ENCODE measurements at regions of chr7 and their contacts with region 1.

Region 1: GRCh38 chr7:38369816-38370493 is 96.5 kb upstream of the TARP start:
- DNase-seq: peak; percentile 93 to 97 (median 97)
- H3K4me3 ChIP-seq: peak overlapping the region in 2 of 7 experiments; percentile 1 to 39
- H3K27ac ChIP-seq: peak overlapping the region in 1 of 2 experiments; percentile 4
- H3K4me1 ChIP-seq: peaks cover 11 to 41% (median 31%) of the 10 kb centered on the region in 4 experiments
- H3K27me3 ChIP-seq: no peaks in the 10 kb centered on the region

Region 2: GRCh38 chr7:37908221-37908788 is 461.6 kb before region 1 on chr7:
- CTCF ChIA-PET with region 1: interaction called, 50 read pairs
- POLR2A ChIA-PET with region 1: no interaction called
- DNase-seq: no peak
- H3K4me3 ChIP-seq: no peak overlapping the region
- H3K27ac ChIP-seq: no peak overlapping the region
- H3K4me1 ChIP-seq: no peaks in the 10 kb centered on the region
- H3K27me3 ChIP-seq: no peaks in the 10 kb centered on the region

Region 3: GRCh38 chr7:38107486-38107893 is 262.5 kb before region 1 on chr7:
- CTCF ChIA-PET with region 1: interaction called, 25 read pairs
- POLR2A ChIA-PET with region 1: no interaction called
- DNase-seq: peak; percentile 51 to 71 (median 65)
- H3K4me3 ChIP-seq: no peak overlapping the region
- H3K27ac ChIP-seq: no peak overlapping the region
- H3K4me1 ChIP-seq: peaks cover 0 to 8% (median 7%) of the 10 kb centered on the region in 4 experiments
- H3K27me3 ChIP-seq: no peaks in the 10 kb centered on the region

Region 4: GRCh38 chr7:38232502-38233366 is 137.2 kb before region 1 on chr7:
- CTCF ChIA-PET with region 1: interaction called, 3 read pairs
- POLR2A ChIA-PET with region 1: interaction called, 10 read pairs
- DNase-seq: peak; percentile 70 to 95 (median 92)
- H3K4me3 ChIP-seq: peak overlapping the region in 3 of 7 experiments; percentile 11 to 48 (median 33)
- H3K27ac ChIP-seq: peak overlapping the region; percentile 13 to 16
- H3K4me1 ChIP-seq: peaks cover 24 to 67% (median 32%) of the 10 kb centered on the region in 4 experiments
- H3K27me3 ChIP-seq: no peaks in the 10 kb centered on the region

Region 5: GRCh38 chr7:38382684-38383083 is 12.7 kb after region 1 on chr7:
- CTCF ChIA-PET with region 1: interaction called, 45 read pairs
- POLR2A ChIA-PET with region 1: no interaction called
- DNase-seq: no peak
- H3K4me3 ChIP-seq: no peak overlapping the region
- H3K27ac ChIP-seq: no peak overlapping the region
- H3K4me1 ChIP-seq: no peaks in the 10 kb centered on the region
- H3K27me3 ChIP-seq: no peaks in the 10 kb centered on the region

Measured in common myeloid progenitor, CD34-positive (primary cell).